ENCODE measurements at regions of chrX and their contacts with region 1.

Region 1: GRCh38 chrX:136953867-136954787 is 73.6 kb upstream of the RBMX start:
- DNase-seq: peak; percentile 87
- H3K4me3 ChIP-seq: no peak overlapping the region
- H3K27ac ChIP-seq: no peak overlapping the region
- H3K4me1 ChIP-seq: no peaks in the 10 kb centered on the region
- H3K27me3 ChIP-seq: no peaks in the 10 kb centered on the region
- CTCF ChIP-seq: peak; percentile 75

Region 2: GRCh38 chrX:137031517-137032340 is 77.6 kb after region 1 on chrX:
- CTCF ChIA-PET with region 1: no interaction called
- POLR2A ChIA-PET with region 1: no interaction called
- intact Hi-C with region 1: no loop called
- DNase-seq: peak; percentile 78
- H3K4me3 ChIP-seq: peak overlapping the region; percentile 35
- H3K27ac ChIP-seq: no peak overlapping the region
- H3K4me1 ChIP-seq: peaks cover 5% of the 10 kb centered on the region
- H3K27me3 ChIP-seq: peaks cover 77% of the 10 kb centered on the region
- CTCF ChIP-seq: no peak

Region 3: DNA sequence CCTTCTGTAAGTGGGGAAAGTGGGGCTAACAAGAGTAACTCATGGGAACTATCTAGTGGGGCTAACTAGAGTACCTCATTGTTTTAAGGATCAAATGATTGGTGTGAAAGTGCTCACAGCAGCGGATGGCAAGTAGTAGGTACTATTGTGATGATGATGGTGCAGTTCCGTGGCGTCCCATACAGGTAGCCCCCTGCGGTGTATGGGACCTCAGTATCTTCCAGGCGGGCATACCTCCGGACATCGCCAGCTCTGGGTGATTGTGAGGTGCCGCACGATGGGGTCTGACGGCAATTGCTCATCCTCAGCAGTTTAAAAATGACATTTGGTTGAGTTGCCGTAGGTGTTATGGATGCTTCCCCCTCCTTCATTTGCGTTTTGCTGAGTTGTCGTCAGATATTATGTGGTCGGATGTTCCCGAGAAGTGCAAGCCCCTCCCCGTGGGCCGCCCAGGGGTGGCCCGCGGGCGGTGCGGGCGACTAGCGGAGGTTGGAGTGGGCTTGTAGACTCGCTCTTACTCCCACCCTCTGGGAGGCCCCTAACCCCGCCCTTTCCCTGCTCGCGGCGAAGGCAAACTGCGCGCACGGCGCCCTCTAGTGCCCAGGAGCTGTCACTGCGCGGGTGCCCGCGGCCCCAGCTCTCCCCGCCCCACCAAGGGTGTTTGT is 98.0 kb after region 1 on chrX:
- CTCF ChIA-PET with region 1: interaction called, 3 read pairs
- POLR2A ChIA-PET with region 1: no interaction called
- intact Hi-C with region 1: loop called (anchors 1 kb)
- DNase-seq: peak; percentile 81
- H3K4me3 ChIP-seq: peak overlapping the region; percentile 40
- H3K27ac ChIP-seq: no peak overlapping the region
- H3K4me1 ChIP-seq: peaks cover 3% of the 10 kb centered on the region
- H3K27me3 ChIP-seq: no peaks in the 10 kb centered on the region
- CTCF ChIP-seq: peak; percentile 96

Region 4: DNA sequence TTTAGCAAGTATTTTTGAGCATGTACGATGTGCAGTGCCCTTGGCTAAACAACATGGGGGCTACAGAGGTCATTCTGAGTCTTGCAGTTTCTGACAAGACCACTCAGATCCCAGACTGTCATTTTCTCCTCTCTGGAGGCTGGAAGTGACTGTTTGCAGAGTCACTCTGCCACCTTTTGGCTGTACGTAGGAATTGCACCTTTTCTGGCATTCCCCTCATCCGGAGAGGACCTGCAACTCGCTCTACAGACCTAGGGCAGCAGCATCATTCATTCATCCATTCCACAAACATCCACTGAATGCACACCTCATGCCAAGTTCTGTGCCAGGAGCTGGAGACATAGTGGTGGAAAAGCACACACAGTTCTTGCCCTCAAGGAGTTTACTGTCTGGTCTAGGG is 240.0 kb after region 1 on chrX:
- CTCF ChIA-PET with region 1: no interaction called
- POLR2A ChIA-PET with region 1: no interaction called
- intact Hi-C with region 1: loop called (anchors 1 kb)
- DNase-seq: peak; percentile 64
- H3K4me3 ChIP-seq: no peak overlapping the region
- H3K27ac ChIP-seq: no peak overlapping the region
- H3K4me1 ChIP-seq: no peaks in the 10 kb centered on the region
- H3K27me3 ChIP-seq: no peaks in the 10 kb centered on the region
- CTCF ChIP-seq: peak; percentile 71

Measured in A673 (cell line).